IMR-90 (cell line): ENCODE measurements at regions of chr3 and their contacts with region 1.

Region 1: DNA sequence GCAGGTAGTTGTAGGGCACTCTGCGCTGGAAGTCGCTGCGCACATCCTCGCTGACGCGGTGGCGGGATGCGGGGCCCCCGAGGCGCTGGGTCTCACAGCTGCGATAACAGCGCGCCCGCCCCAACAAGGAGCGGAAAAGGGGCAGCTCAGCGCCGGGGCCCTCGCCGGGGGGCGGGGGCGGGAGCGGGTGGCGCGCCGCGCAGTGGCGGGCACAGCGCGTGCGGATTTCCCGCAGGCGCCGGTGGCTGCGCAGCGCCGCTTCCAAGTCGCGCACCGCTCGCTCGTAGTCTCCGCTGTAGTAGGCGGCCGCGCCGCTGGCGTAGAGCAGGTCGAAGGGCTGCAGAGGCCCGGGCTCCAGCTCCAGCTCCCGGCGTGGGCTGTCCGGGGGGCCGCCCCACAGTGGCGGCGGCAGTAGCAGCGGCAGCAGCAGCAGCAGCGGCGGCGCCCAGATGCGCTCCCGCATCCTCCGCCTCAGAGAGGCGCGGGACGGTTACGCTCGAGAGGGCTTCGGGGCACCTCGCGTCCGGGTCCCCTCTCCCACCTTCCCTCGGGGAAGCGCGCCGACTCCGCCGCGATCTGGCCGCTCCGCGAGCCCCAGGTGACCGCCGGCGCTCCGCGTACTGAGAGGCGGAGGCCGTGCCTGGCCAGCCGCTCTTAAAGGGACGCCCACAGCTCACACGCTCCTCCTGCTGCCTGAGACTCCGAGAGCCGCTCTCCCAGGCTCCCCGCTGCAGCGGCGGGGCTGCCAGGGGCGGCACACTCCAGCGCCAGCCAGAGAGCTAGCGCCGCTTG is at the start of gene P3H2:
- DNase-seq: peak; percentile 93
- ATAC-seq: peak; percentile 94
- H3K4me3 ChIP-seq: peak within 1 kb of the TSS; percentile 86
- H3K27ac ChIP-seq: peak within 1 kb of the TSS; percentile 66
- H3K4me1 ChIP-seq: peaks cover 15% of the 10 kb centered on the region
- H3K27me3 ChIP-seq: no peaks in the 10 kb centered on the region
- CTCF ChIP-seq: peak; percentile 70
- POLR2A ChIP-seq: peak; percentile 86
- RAD21 ChIP-seq: peak; percentile 75
- total RNA-seq, gene P3H2: 54.7 and 74.4 TPM in 2 replicates

Region 2: GRCh38 chr3:190017521-190018288 is 102.8 kb before region 1 on chr3:
- CTCF ChIA-PET with region 1: no interaction called
- POLR2A ChIA-PET with region 1: no interaction called
- dilution Hi-C with region 1: no loop called
- in situ Hi-C with region 1: no loop called
- intact Hi-C with region 1: loop called (anchors 1 kb)
- DNase-seq: peak; percentile 84
- ATAC-seq: peak; percentile 78
- H3K4me3 ChIP-seq: no peak overlapping the region
- H3K27ac ChIP-seq: no peak overlapping the region
- H3K4me1 ChIP-seq: peaks cover 15% of the 10 kb centered on the region; the same call in 1 of the 2 replicates
- H3K27me3 ChIP-seq: no peaks in the 10 kb centered on the region
- CTCF ChIP-seq: peak; percentile 67
- POLR2A ChIP-seq: no peak
- RAD21 ChIP-seq: peak; percentile 79

Region 3: DNA sequence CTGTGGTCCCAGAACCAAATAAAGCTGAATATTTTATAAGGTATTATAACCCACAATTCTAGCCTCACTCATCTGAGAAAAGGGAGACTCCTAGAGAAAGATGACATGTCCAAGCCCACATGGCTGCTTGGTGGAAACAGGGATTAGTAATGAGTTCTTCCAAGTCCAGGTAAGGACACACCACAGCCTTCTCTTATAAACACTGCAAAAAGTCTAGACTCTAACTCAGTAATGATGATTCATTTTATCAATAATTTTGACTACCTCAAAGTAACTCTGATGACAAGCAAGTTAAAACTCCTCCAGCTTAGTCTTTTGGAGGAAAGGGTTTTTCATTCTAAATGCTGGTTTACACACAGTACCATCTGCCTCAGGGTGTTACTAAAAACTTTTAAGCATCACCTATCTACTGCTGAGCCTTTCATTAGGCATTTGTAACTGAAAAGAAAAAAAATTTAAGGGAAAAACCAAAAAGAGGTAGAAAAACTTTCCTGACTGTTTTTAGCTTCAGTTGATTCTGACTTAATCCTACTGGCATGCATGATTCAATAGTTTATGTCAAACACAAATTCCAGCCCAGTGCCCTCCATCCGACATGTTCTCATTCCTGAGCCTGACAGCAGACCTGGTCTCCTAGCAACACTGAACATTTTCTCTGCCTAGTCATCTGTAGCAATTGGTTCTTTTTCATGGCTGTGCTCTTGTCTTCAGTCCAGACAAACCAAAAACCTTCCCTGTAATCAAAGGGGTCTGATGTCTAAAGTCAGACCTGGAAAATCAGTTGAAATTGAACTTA is 43.7 kb before region 1 on chr3:
- CTCF ChIA-PET with region 1: interaction called, 4 read pairs
- POLR2A ChIA-PET with region 1: no interaction called
- dilution Hi-C with region 1: no loop called
- in situ Hi-C with region 1: no loop called
- intact Hi-C with region 1: loop called (anchors 2 kb)
- DNase-seq: peak; percentile 99
- ATAC-seq: peak; percentile 91
- H3K4me3 ChIP-seq: no peak overlapping the region
- H3K27ac ChIP-seq: peak overlapping the region; percentile 75
- H3K4me1 ChIP-seq: peaks cover 16% of the 10 kb centered on the region
- H3K27me3 ChIP-seq: no peaks in the 10 kb centered on the region
- CTCF ChIP-seq: no peak
- POLR2A ChIP-seq: no peak; the same call in 1 of the 2 replicates
- RAD21 ChIP-seq: peak; percentile 19

Region 4: DNA sequence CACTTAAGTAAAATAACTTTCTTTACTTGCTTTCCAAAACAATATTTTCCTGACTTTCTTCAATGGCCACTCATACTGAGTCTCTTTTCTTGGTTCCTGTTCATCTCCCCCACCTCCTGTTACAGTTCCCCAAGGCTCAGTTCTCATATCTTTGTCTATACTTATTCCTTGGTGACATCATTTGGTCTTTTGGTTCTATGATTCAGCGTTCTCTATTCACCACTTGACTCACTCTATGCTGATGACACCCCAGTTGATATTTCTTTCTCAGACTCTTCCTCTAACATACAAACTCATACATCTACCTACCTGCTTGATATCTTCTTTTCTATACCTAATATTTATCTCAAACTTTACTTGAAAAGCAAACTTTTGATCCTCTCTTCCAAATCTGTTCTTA is 85.3 kb after region 1 on chr3:
- CTCF ChIA-PET with region 1: interaction called, 5 read pairs
- POLR2A ChIA-PET with region 1: no interaction called
- dilution Hi-C with region 1: no loop called
- in situ Hi-C with region 1: no loop called
- intact Hi-C with region 1: loop called (anchors 1 kb)
- DNase-seq: peak; percentile 92
- ATAC-seq: peak; percentile 86
- H3K4me3 ChIP-seq: no peak overlapping the region
- H3K27ac ChIP-seq: no peak overlapping the region
- H3K4me1 ChIP-seq: no peaks in the 10 kb centered on the region
- H3K27me3 ChIP-seq: no peaks in the 10 kb centered on the region
- CTCF ChIP-seq: no peak
- POLR2A ChIP-seq: no peak
- RAD21 ChIP-seq: 0 out of 2 replicates have a peak, but pooled peaks have one; percentile 23

Region 5: DNA sequence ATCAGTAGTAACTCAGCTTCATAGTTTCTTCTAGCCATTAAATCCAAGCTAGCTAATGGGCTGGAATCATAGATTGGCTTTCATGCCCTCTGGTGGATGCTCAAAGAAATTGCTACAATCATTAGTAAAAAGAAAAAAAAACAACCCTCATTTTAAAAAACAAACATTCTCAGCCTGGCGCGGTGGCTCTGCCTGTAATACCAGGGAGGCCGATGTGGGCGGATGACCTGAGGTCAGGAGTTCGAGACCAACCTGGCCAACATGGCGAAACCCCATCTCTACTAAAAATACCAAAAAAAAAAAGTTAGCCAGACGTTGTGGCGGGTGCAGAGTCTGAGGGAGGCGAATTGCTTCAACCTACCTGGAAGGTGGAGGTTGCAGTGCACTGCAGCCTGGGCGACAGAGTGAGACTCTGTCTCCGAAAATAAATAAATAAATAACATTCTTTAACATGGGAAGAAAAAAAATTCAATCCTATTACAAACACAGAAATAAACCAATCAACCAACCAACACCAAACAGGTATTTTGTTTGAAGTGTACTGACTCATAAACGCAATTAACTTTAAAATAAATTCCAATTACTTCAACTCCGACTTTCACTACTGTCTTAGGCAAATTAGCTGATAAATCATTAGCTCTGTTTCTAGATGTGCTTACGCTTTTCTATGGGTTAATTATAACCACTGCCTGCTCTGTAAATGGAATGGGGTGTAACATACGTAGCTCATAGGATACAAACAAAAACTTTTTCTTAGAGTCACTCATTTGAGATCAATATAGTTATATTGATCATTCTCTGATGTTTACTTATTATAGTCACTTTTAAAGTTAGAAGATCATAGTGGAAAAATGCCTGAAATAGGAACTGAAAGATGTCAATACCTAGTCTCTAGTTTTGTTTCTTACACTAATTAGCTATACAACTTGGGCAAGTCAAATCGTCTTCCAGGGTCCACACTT is 304.3 kb after region 1 on chr3:
- CTCF ChIA-PET with region 1: no interaction called
- POLR2A ChIA-PET with region 1: no interaction called
- dilution Hi-C with region 1: no loop called
- in situ Hi-C with region 1: no loop called
- intact Hi-C with region 1: loop called (anchors 5 kb)
- DNase-seq: peak; percentile 76
- ATAC-seq: peak; percentile 75
- H3K4me3 ChIP-seq: no peak overlapping the region
- H3K27ac ChIP-seq: no peak overlapping the region
- H3K4me1 ChIP-seq: no peaks in the 10 kb centered on the region
- H3K27me3 ChIP-seq: no peaks in the 10 kb centered on the region
- CTCF ChIP-seq: peak; percentile 75
- POLR2A ChIP-seq: no peak
- RAD21 ChIP-seq: peak; percentile 81